Endothelial cell of umbilical vein (primary cell): ENCODE measurements at regions of chr15 and their contacts with region 1.

Region 1: GRCh38 chr15:74228723-74229081 is 7.4 kb upstream of the CCDC33 start:
- DNase-seq: no peak
- H3K4me3 ChIP-seq: no peak overlapping the region
- H3K27ac ChIP-seq: no peak overlapping the region
- H3K4me1 ChIP-seq: no peaks in the 10 kb centered on the region
- H3K27me3 ChIP-seq: peaks cover 9 to 16% of the 10 kb centered on the region in 2 experiments
- CTCF ChIP-seq: no peak
- POLR2A ChIP-seq: no peak

Region 2: GRCh38 chr15:74263466-74263865 is 34.8 kb after region 1 on chr15:
- CTCF ChIA-PET with region 1: no interaction called
- POLR2A ChIA-PET with region 1: no interaction called
- dilution Hi-C with region 1: no loop called
- intact Hi-C with region 1: no loop called
- DNase-seq: no peak
- H3K4me3 ChIP-seq: no peak overlapping the region
- H3K27ac ChIP-seq: no peak overlapping the region
- H3K4me1 ChIP-seq: no peaks in the 10 kb centered on the region
- H3K27me3 ChIP-seq: no peaks in the 10 kb centered on the region
- CTCF ChIP-seq: no peak
- POLR2A ChIP-seq: no peak

Region 3: DNA sequence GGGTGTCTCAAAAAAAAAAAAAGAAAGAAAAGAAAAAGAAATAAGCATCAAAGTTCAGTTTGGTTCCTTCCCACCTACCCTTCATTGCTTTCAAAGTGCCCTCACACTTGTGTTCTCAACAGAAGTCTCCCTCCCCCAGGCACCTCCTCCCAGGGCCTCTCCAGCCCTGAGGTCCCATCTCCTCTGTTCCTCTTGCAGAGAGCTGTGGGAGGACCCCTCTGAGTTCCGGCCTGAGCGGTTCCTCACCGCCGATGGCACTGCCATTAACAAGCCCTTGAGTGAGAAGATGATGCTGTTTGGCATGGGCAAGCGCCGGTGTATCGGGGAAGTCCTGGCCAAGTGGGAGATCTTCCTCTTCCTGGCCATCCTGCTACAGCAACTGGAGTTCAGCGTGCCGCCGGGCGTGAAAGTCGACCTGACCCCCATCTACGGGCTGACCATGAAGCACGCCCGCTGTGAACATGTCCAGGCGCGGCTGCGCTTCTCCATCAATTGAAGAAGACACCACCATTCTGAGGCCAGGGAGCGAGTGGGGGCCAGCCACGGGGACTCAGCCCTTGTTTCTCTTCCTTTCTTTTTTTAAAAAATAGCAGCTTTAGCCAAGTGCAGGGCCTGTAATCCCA is 526.0 kb after region 1 on chr15:
- CTCF ChIA-PET with region 1: no interaction called
- POLR2A ChIA-PET with region 1: no interaction called
- dilution Hi-C with region 1: no loop called
- intact Hi-C with region 1: loop called (anchors 10 kb)
- DNase-seq: no peak
- H3K4me3 ChIP-seq: no peak overlapping the region
- H3K27ac ChIP-seq: no peak overlapping the region
- H3K4me1 ChIP-seq: no peaks in the 10 kb centered on the region
- H3K27me3 ChIP-seq: peaks cover 0 to 1% of the 10 kb centered on the region in 2 experiments
- CTCF ChIP-seq: no peak
- POLR2A ChIP-seq: no peak